Mammary epithelial cell (primary cell): ENCODE measurements at regions of chr17 and their contacts with region 1.

Region 1: GRCh38 chr17:78761789-78762406 is 20.2 kb downstream of the CYTH1 start:
- DNase-seq: no peak
- H3K4me3 ChIP-seq: no peak overlapping the region
- H3K27ac ChIP-seq: no peak overlapping the region
- H3K4me1 ChIP-seq: peaks cover 28% of the 10 kb centered on the region
- H3K27me3 ChIP-seq: no peaks in the 10 kb centered on the region
- CTCF ChIP-seq: no peak

Region 2: GRCh38 chr17:78725448-78726021 is 36.4 kb before region 1 on chr17:
- CTCF ChIA-PET with region 1: no interaction called
- dilution Hi-C with region 1: loop called (anchors 5 kb)
- in situ Hi-C with region 1: no loop called
- intact Hi-C with region 1: no loop called
- DNase-seq: no peak
- H3K4me3 ChIP-seq: no peak overlapping the region
- H3K27ac ChIP-seq: no peak overlapping the region
- H3K4me1 ChIP-seq: peaks cover 9% of the 10 kb centered on the region
- H3K27me3 ChIP-seq: no peaks in the 10 kb centered on the region
- CTCF ChIP-seq: no peak

Region 3: DNA sequence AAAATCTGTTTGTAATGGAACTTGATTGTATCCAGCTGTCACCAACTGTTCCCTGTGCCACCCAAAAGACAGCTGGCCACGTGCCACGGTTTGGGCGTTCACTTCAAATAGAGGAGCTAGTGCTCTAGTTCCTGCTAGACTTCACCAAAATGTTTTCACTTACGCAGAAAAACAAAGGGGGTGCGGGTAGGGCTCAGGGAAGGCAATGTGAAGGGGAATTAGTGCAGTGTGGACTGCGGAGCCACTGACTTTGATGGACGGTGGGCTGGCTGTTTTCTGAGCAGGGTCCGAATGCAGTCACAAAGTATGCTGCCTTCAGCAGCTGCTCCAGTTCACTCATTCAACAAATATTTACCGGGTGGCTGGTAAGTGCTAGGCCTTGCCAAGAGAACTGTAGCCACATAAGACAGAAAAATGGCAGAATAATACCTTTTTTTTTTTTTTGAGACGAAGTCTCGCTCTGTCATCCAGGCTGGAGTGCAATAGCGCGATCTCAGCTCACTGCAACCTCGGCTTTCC is 27.8 kb after region 1 on chr17:
- CTCF ChIA-PET with region 1: no interaction called
- dilution Hi-C with region 1: no loop called
- in situ Hi-C with region 1: no loop called
- intact Hi-C with region 1: no loop called
- DNase-seq: no peak
- H3K4me3 ChIP-seq: no peak overlapping the region
- H3K27ac ChIP-seq: no peak overlapping the region
- H3K4me1 ChIP-seq: peaks cover 13% of the 10 kb centered on the region
- H3K27me3 ChIP-seq: no peaks in the 10 kb centered on the region
- CTCF ChIP-seq: no peak

Region 4: GRCh38 chr17:78852709-78853121 is 90.8 kb after region 1 on chr17:
- CTCF ChIA-PET with region 1: no interaction called
- dilution Hi-C with region 1: no loop called
- in situ Hi-C with region 1: no loop called
- intact Hi-C with region 1: no loop called
- DNase-seq: no peak
- H3K4me3 ChIP-seq: no peak overlapping the region
- H3K27ac ChIP-seq: no peak overlapping the region
- H3K4me1 ChIP-seq: no peaks in the 10 kb centered on the region
- H3K27me3 ChIP-seq: no peaks in the 10 kb centered on the region
- CTCF ChIP-seq: no peak